MCF 10A (cell line): ENCODE measurements at regions of chr11 and their contacts with region 1.

Region 1: GRCh38 chr11:112289588-112290492 is 29.2 kb upstream of the PLET1 start:
- DNase-seq: peak; percentile 59
- H3K4me3 Mint-ChIP-seq: peak overlapping the region; percentile 67
- H3K27ac Mint-ChIP-seq: no peak overlapping the region
- H3K4me1 Mint-ChIP-seq: peaks cover 16% of the 10 kb centered on the region
- H3K27me3 Mint-ChIP-seq: peaks cover 11% of the 10 kb centered on the region
- CTCF ChIP-seq: peak; percentile 96

Region 2: GRCh38 chr11:111230122-111230465 is 1059.7 kb before region 1 on chr11:
- CTCF ChIA-PET with region 1: no interaction called
- POLR2A ChIA-PET with region 1: no interaction called
- intact Hi-C with region 1: no loop called
- DNase-seq: no peak
- H3K4me3 Mint-ChIP-seq: peak overlapping the region; percentile 79
- H3K27ac Mint-ChIP-seq: peak overlapping the region; percentile 85
- H3K4me1 Mint-ChIP-seq: no peaks in the 10 kb centered on the region
- H3K27me3 Mint-ChIP-seq: peaks cover 40% of the 10 kb centered on the region
- CTCF ChIP-seq: no peak

Region 3: GRCh38 chr11:112321521-112322172 is 31.8 kb after region 1 on chr11:
- CTCF ChIA-PET with region 1: interaction called, 4 read pairs
- POLR2A ChIA-PET with region 1: interaction called, 14 read pairs
- intact Hi-C with region 1: loop called (anchors 1 kb)
- DNase-seq: peak; percentile 99
- H3K4me3 Mint-ChIP-seq: no peak overlapping the region
- H3K27ac Mint-ChIP-seq: peak overlapping the region; percentile 44
- H3K4me1 Mint-ChIP-seq: peaks cover 50% of the 10 kb centered on the region
- H3K27me3 Mint-ChIP-seq: no peaks in the 10 kb centered on the region
- CTCF ChIP-seq: no peak

Region 4: GRCh38 chr11:112453601-112454577 is 164.0 kb after region 1 on chr11:
- CTCF ChIA-PET with region 1: interaction called, 3 read pairs
- POLR2A ChIA-PET with region 1: no interaction called
- intact Hi-C with region 1: loop called (anchors 1 kb)
- DNase-seq: peak; percentile 59
- H3K4me3 Mint-ChIP-seq: no peak overlapping the region
- H3K27ac Mint-ChIP-seq: no peak overlapping the region
- H3K4me1 Mint-ChIP-seq: no peaks in the 10 kb centered on the region
- H3K27me3 Mint-ChIP-seq: peaks cover 31% of the 10 kb centered on the region
- CTCF ChIP-seq: peak; percentile 22

Region 5: DNA sequence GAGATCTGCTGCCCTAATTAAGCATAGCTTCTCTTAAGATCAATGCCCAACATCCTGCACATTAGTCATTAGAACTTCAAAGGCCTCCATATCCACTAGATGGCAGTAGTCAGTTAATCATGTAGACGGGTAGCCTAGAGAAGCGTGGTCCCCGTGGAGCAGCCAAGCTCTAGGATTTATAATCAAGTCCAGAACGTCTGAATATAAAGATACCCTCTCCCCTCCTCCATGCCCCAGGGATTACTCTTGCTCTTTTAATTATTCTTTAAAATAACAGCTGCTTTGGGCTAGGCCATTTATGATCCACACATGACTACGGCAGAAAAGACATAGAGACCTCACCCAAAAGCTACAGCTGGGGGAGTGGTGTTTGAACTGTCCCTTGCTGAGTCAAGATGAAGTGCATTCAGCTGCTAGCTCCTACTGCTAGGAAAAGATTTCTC is 298.4 kb after region 1 on chr11:
- CTCF ChIA-PET with region 1: interaction called, 23 read pairs
- POLR2A ChIA-PET with region 1: no interaction called
- intact Hi-C with region 1: loop called (anchors 2 kb)
- DNase-seq: peak; percentile 88
- H3K4me3 Mint-ChIP-seq: no peak overlapping the region
- H3K27ac Mint-ChIP-seq: no peak overlapping the region
- H3K4me1 Mint-ChIP-seq: no peaks in the 10 kb centered on the region
- H3K27me3 Mint-ChIP-seq: no peaks in the 10 kb centered on the region
- CTCF ChIP-seq: peak; percentile 66